Activated CD4-positive, alpha-beta T cell treated with anti-CD3 and anti-CD28 coated beads, Interleukin-2, amount 10 ng/mL, durations not matched to agents 24 days and 14 days (primary cell): ENCODE measurements at regions of chr15 and their contacts with region 1.

Region 1: GRCh38 chr15:63870403-63871209 is 36.9 kb upstream of the HERC1 start:
- DNase-seq: no peak
- H3K4me3 Mint-ChIP-seq: no peak overlapping the region
- H3K27ac Mint-ChIP-seq: no peak overlapping the region
- H3K4me1 Mint-ChIP-seq: peaks cover 19% of the 10 kb centered on the region
- H3K27me3 Mint-ChIP-seq: no peaks in the 10 kb centered on the region

Region 2: GRCh38 chr15:63833021-63833696 is 37.4 kb before region 1 on chr15:
- intact Hi-C with region 1: loop called (anchors 1 kb)
- DNase-seq: peak; percentile 84
- H3K4me3 Mint-ChIP-seq: peak overlapping the region; percentile 99
- H3K27ac Mint-ChIP-seq: peak overlapping the region; percentile 100
- H3K4me1 Mint-ChIP-seq: peaks cover 46% of the 10 kb centered on the region
- H3K27me3 Mint-ChIP-seq: peaks cover 6% of the 10 kb centered on the region